PC-3 (cell line): ENCODE measurements at regions of chr4 and their contacts with region 1.

Region 1: GRCh38 chr4:186859420-186859819 is 135.8 kb upstream of the FAT1 start:
- DNase-seq: no peak
- ATAC-seq: no peak
- H3K4me3 ChIP-seq: no peak overlapping the region
- H3K27ac ChIP-seq: no peak overlapping the region
- H3K4me1 ChIP-seq: peaks cover 14% of the 10 kb centered on the region
- H3K27me3 ChIP-seq: no peaks in the 10 kb centered on the region
- CTCF ChIP-seq: no peak

Region 2: DNA sequence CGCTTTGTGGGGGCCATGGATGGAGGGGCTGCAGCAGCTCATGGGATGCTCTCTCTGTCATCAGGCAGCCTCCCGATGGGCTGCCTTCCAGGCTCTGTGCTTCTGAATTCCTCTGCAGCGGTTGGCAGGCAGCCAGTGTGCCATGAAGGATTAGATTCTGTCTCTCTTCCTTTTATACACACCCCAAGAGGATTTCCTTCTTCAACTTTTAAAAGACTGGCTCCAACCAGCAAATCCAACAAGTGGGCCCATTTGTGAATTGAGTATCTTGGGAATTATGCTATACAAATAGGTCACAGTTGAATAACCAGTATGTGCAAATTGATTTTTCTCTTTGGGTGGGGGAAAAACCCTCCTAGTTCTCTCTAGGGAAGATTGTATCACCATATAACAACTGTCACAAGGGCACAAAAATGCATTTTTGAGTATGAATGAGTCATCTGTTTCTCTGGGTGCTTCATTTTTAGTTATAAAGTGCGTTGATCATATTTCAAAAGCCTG is 39.0 kb before region 1 on chr4:
- CTCF ChIA-PET with region 1: no interaction called
- POLR2A ChIA-PET with region 1: no interaction called
- intact Hi-C with region 1: loop called (anchors 5 kb)
- DNase-seq: no peak
- ATAC-seq: no peak
- H3K4me3 ChIP-seq: no peak overlapping the region
- H3K27ac ChIP-seq: no peak overlapping the region
- H3K4me1 ChIP-seq: no peaks in the 10 kb centered on the region; the same call in 1 of the 2 replicates
- H3K27me3 ChIP-seq: no peaks in the 10 kb centered on the region
- CTCF ChIP-seq: no peak

Region 3: DNA sequence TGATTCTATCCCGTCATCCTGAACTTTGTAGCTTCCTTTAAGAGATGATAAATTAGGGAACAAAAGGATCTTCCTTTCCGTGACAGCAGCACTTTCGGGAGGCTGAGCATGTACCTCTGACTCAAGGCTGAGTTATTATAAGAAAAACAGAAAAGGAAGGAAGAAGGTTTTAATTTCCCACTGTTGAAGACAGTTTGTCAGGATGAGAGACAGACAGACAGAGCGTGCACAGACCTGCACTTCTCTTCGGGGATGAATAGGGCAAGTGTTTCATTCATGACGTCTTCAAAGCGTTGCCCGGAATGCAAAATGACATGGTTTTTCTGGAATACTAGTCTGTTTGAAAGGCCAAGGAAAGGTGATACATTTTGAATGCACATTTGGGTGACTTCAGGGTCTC is 269.6 kb after region 1 on chr4:
- CTCF ChIA-PET with region 1: no interaction called
- POLR2A ChIA-PET with region 1: no interaction called
- intact Hi-C with region 1: no loop called
- DNase-seq: peak; percentile 36
- ATAC-seq: peak; percentile 77
- H3K4me3 ChIP-seq: no peak overlapping the region
- H3K27ac ChIP-seq: peak overlapping the region; percentile 70
- H3K4me1 ChIP-seq: peaks cover 17% of the 10 kb centered on the region; the same call in 1 of the 2 replicates
- H3K27me3 ChIP-seq: no peaks in the 10 kb centered on the region
- CTCF ChIP-seq: no peak